ENCODE measurements at regions of chr11 and their contacts with region 1.

Region 1: GRCh38 chr11:76919887-76920746 is 59.4 kb downstream of the ACER3 start:
- DNase-seq: peak; percentile 37 to 64
- ATAC-seq: peak; percentile 81 to 91
- H3K4me3 ChIP-seq: no peak overlapping the region
- H3K27ac ChIP-seq: no peak overlapping the region
- H3K4me1 ChIP-seq: peaks cover 6% of the 10 kb centered on the region in 2 donors
- H3K27me3 ChIP-seq: no peaks in the 10 kb centered on the region
- CTCF ChIP-seq: peak; percentile 59 to 91 (median 72)
- POLR2A ChIP-seq: no peak

Region 2: GRCh38 chr11:76721755-76722677 is 198.1 kb before region 1 on chr11:
- in situ Hi-C with region 1: loop called (anchors 10 to 25 kb)
- intact Hi-C with region 1: no loop called
- DNase-seq: peak; percentile 53 to 66
- ATAC-seq: peak; percentile 83 to 96
- H3K4me3 ChIP-seq: no peak overlapping the region
- H3K27ac ChIP-seq: no peak overlapping the region
- H3K4me1 ChIP-seq: peaks cover 0 to 3% of the 10 kb centered on the region in 2 donors
- H3K27me3 ChIP-seq: peaks cover 0 to 2% (median 0%) of the 10 kb centered on the region in 3 donors
- CTCF ChIP-seq: peak; percentile 53 to 92 (median 72)
- POLR2A ChIP-seq: no peak

Region 3: GRCh38 chr11:76734456-76735420 is 185.4 kb before region 1 on chr11:
- in situ Hi-C with region 1: loop called (anchors 10 to 25 kb)
- intact Hi-C with region 1: loop called (anchors 5 kb)
- DNase-seq: no peak
- ATAC-seq: no peak
- H3K4me3 ChIP-seq: no peak overlapping the region
- H3K27ac ChIP-seq: no peak overlapping the region
- H3K4me1 ChIP-seq: no peaks in the 10 kb centered on the region
- H3K27me3 ChIP-seq: no peaks in the 10 kb centered on the region
- CTCF ChIP-seq: no peak
- POLR2A ChIP-seq: no peak

Region 4: GRCh38 chr11:76744186-76745043 is 175.7 kb before region 1 on chr11:
- in situ Hi-C with region 1: loop called in 1 of 4 experiments (anchors 25 kb)
- intact Hi-C with region 1: no loop called
- DNase-seq: peak in 1 of 2 donors; percentile 48
- ATAC-seq: peak in 1 of 2 donors; percentile 51
- H3K4me3 ChIP-seq: no peak overlapping the region
- H3K27ac ChIP-seq: no peak overlapping the region
- H3K4me1 ChIP-seq: no peaks in the 10 kb centered on the region
- H3K27me3 ChIP-seq: no peaks in the 10 kb centered on the region
- CTCF ChIP-seq: no peak
- POLR2A ChIP-seq: no peak

Region 5: GRCh38 chr11:76807206-76807875 is 112.8 kb before region 1 on chr11:
- in situ Hi-C with region 1: loop called in 3 of 4 experiments (anchors 5 kb)
- intact Hi-C with region 1: loop called (anchors 1 kb)
- DNase-seq: peak; percentile 61 to 75
- ATAC-seq: peak; percentile 70 to 83
- H3K4me3 ChIP-seq: peak overlapping the region in 3 of 4 donors; percentile 18 to 27 (median 23)
- H3K27ac ChIP-seq: no peak overlapping the region
- H3K4me1 ChIP-seq: peaks cover 10 to 13% of the 10 kb centered on the region in 2 donors
- H3K27me3 ChIP-seq: no peaks in the 10 kb centered on the region
- CTCF ChIP-seq: peak; percentile 70 to 85 (median 79)
- POLR2A ChIP-seq: no peak

Region 6: DNA sequence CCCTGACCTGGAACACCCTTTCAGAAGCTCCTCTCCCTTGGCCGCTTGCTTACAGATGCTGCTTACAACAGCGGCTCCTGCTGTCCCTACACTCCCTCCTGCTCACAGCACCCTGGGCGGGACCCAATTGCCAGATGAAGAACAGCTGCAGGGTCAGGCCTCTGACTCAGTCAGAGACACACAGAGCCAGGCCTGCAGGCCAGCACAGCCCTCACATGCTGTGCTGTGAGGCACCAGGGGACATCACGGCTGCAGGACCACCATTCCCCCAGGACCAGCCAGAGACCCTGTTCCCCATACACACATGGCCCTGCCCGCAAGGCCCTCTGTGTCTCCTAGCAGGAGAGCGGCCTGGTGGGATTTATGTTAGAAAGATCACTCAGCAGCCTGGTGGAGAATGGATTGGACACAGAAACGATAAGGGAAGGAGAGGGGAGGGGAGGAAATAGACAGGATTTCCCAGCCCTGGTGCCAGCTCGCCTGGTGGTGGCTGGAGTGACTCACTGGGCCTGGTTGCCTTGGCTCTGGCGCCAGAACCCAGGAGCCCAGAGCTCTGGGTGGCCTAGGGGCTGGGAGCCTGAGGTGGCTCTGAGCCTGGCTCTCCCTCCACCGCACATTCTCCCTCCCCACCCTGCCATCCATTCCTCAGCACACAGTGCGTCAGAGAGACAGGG is 153.3 kb after region 1 on chr11:
- in situ Hi-C with region 1: no loop called
- intact Hi-C with region 1: loop called (anchors 10 kb)
- DNase-seq: peak; percentile 72 to 83
- ATAC-seq: peak; percentile 82 to 91
- H3K4me3 ChIP-seq: no peak overlapping the region
- H3K27ac ChIP-seq: peak overlapping the region; percentile 65 to 74 (median 70)
- H3K4me1 ChIP-seq: peaks cover 13 to 15% of the 10 kb centered on the region in 2 donors
- H3K27me3 ChIP-seq: no peaks in the 10 kb centered on the region
- CTCF ChIP-seq: peak in 2 of 5 experiments; percentile 26 to 39
- POLR2A ChIP-seq: no peak

Region 7: DNA sequence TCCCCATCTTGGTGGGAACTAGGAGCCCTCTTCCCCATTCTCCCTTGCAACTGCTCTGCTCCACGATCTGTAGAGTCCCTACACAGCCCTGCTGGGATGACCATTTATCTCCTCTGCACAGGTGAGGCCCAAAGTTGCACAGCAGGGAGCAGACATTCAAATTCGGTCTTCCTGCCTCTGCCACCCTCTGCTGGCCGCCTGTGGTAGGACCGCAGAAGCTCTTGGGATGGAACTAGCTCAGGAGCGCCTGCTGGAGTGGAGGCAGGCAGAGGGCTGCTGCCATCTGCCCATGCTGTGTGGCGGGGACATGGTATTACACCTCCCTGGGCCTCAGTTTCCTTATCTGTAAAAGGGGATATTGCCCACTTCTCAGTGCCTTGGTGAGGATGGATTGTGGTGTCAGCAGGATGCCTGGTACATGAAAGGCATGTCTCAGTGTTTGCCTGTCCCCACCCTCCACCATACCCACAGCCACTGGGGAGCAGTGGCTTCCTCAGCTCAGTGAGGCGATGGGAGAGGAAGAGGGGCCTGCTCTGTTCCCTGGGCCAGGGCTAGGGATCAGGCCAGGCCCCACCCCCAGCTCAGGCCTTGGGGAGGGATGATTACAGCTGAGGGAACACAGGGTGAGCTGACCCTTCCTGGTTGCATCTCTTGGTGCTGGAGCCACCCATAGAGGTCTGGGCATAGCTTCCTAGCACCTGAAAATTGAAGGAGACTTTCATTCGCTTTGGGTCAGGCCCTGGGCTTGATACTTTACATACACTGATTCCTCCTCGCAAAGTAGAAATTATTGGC is 171.2 kb after region 1 on chr11:
- in situ Hi-C with region 1: no loop called
- intact Hi-C with region 1: loop called (anchors 2 kb)
- DNase-seq: peak; percentile 43 to 62
- ATAC-seq: peak; percentile 89 to 92
- H3K4me3 ChIP-seq: no peak overlapping the region
- H3K27ac ChIP-seq: no peak overlapping the region
- H3K4me1 ChIP-seq: no peaks in the 10 kb centered on the region
- H3K27me3 ChIP-seq: no peaks in the 10 kb centered on the region
- CTCF ChIP-seq: peak; percentile 83 to 91 (median 87)
- POLR2A ChIP-seq: no peak

Measured in gastrocnemius medialis (tissue), 4 donors.